CD4-positive, alpha-beta memory T cell (primary cell): ENCODE measurements at regions of chr5 and their contacts with region 1.

Region 1: GRCh38 chr5:122999945-123000563 is 36.5 kb downstream of the PPIC start:
- DNase-seq: peak in 3 of 5 donors; percentile 1 to 12 (median 11)
- H3K4me3 ChIP-seq: no peak overlapping the region
- H3K4me3 Mint-ChIP-seq: no peak overlapping the region
- H3K27ac ChIP-seq: no peak overlapping the region
- H3K27ac Mint-ChIP-seq: peak overlapping the region in 2 of 7 donors; percentile 13 to 15
- H3K4me1 ChIP-seq: no peaks in the 10 kb centered on the region
- H3K4me1 Mint-ChIP-seq: no peaks in the 10 kb centered on the region
- H3K27me3 ChIP-seq: no peaks in the 10 kb centered on the region
- H3K27me3 Mint-ChIP-seq: no peaks in the 10 kb centered on the region

Region 2: GRCh38 chr5:122192497-122193496 is 807.3 kb before region 1 on chr5:
- CTCF ChIA-PET with region 1: no interaction called
- POLR2A ChIA-PET with region 1: no interaction called
- intact Hi-C with region 1: loop called (anchors 5 kb)
- DNase-seq: peak in 2 of 5 donors; percentile 3 to 5
- H3K4me3 ChIP-seq: no peak overlapping the region
- H3K4me3 Mint-ChIP-seq: no peak overlapping the region
- H3K27ac ChIP-seq: no peak overlapping the region
- H3K27ac Mint-ChIP-seq: no peak overlapping the region
- H3K4me1 ChIP-seq: no peaks in the 10 kb centered on the region
- H3K4me1 Mint-ChIP-seq: no peaks in the 10 kb centered on the region
- H3K27me3 ChIP-seq: no peaks in the 10 kb centered on the region
- H3K27me3 Mint-ChIP-seq: peaks cover 2 to 4% of the 10 kb centered on the region in 2 donors